ENCODE measurements at regions of chr9 and their contacts with region 1.

Region 1: DNA sequence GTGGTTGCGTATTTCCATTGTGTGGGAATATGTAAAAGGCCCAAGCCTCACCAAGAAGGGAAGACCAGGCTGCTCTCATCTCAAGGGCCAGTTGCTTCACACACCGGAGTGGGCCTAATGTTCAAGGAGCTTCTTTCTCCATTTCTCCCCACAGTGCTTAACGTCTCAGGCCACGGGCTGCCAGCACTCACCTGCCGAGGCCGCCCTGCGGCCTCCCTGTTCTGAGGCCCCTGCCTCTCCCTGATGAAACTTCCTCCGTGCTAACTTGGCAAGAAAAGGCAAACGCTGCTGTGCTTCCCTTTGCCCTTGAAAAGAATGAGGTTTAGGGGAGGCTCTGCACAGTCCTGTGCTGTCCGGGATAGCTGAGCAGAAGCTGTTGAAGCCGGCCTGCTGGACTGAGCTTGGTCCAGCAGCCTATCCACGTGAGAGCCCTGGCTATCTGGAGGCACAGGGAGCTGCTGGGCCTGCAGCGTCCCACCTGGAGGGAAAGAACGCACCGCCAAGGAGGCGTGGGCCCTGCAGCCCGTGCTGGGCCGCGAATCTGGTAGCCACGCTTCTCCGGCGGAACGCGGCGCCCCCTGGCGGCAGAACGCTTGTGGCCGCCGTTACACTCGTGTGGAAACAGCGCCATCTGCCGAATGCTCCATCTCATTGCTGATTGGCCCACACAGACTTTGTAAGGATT is 73.5 kb upstream of the PRSS3 start:
- H3K4me3 ChIP-seq: no peak overlapping the region
- H3K27ac ChIP-seq: no peak overlapping the region
- H3K4me1 ChIP-seq: no peaks in the 10 kb centered on the region
- CTCF ChIP-seq: peak; percentile 100

Region 2: GRCh38 chr9:33374634-33375213 is 347.1 kb before region 1 on chr9:
- CTCF ChIA-PET with region 1: interaction called, 15 read pairs
- POLR2A ChIA-PET with region 1: no interaction called
- H3K4me3 ChIP-seq: no peak overlapping the region
- H3K27ac ChIP-seq: no peak overlapping the region
- H3K4me1 ChIP-seq: no peaks in the 10 kb centered on the region
- CTCF ChIP-seq: no peak; the same call in 1 of the 2 replicates

Region 3: DNA sequence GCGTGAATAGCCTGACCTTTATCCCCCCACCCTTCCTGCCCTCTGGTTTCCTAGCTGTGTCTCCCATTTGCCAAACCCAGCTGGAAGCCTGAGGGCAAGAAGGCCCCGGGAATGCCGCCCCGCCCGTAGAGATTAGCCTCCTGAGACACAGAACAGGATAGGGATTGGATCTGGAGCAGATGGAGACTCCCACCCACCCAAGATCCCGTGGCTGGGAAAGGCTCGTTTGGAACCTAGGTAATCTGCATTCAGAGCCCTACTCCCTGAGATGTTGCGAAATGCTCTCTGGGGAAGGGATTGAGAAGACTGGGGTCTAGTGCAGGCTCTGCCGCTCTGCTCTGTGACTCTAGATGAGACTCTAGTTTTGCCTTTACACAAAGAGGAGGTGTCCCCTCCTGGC is 285.4 kb before region 1 on chr9:
- CTCF ChIA-PET with region 1: no interaction called
- POLR2A ChIA-PET with region 1: no interaction called
- H3K4me3 ChIP-seq: no peak overlapping the region
- H3K27ac ChIP-seq: no peak overlapping the region
- H3K4me1 ChIP-seq: no peaks in the 10 kb centered on the region
- CTCF ChIP-seq: no peak

Region 4: GRCh38 chr9:33524306-33524947 is 197.4 kb before region 1 on chr9:
- CTCF ChIA-PET with region 1: interaction called, 10 read pairs
- POLR2A ChIA-PET with region 1: no interaction called
- H3K4me3 ChIP-seq: peak overlapping the region; percentile 72
- H3K27ac ChIP-seq: peak overlapping the region; percentile 85
- H3K4me1 ChIP-seq: 0 out of 2 replicates have a peak, but pooled peaks cover 2% of the 10 kb centered on the region
- CTCF ChIP-seq: no peak

Region 5: GRCh38 chr9:33638391-33638915 is 83.4 kb before region 1 on chr9:
- CTCF ChIA-PET with region 1: interaction called, 44 read pairs
- POLR2A ChIA-PET with region 1: no interaction called
- H3K4me3 ChIP-seq: no peak overlapping the region
- H3K27ac ChIP-seq: no peak overlapping the region
- H3K4me1 ChIP-seq: no peaks in the 10 kb centered on the region
- CTCF ChIP-seq: no peak

Region 6: DNA sequence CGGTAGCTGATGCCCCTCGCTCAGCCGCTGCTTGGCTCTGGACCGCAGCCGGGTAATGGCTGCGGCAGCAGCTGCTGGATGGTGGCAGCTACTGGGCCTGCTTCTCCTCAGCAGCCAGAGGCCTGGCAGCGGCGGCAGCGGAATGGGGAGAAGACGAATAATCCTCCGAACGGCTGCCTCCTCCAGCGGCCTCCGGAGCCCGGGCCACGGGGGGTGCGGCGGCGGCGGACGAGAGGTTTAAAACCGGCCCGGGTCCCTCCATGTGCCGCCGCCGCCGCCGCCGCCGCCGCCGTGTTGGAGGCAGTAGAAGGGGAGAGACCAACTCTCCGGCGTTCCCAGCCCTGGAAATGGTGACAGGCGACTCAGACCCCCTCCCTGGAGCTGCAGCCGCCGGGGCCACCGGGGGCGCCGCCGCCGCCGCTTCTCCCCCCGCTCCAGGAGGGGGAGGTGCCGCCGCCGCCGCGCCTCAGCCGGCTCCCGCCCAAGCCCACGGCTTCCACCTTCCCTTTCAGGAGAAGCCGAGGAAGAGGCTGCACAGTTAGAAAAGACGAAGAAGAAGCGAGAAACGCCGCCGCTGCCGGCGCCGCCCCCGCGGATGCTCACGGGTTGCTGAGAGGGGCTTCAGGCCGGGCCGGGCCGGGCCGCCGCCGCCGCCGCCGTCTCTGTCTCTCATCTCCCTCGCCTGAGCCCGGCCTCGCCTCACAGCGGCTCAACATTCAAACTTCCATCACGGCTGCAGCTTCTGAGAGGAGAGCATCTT is 44.9 kb before region 1 on chr9:
- CTCF ChIA-PET with region 1: interaction called, 22 read pairs
- POLR2A ChIA-PET with region 1: no interaction called
- H3K4me3 ChIP-seq: peak overlapping the region; percentile 65
- H3K27ac ChIP-seq: peak overlapping the region; percentile 97
- H3K4me1 ChIP-seq: peaks cover 2% of the 10 kb centered on the region; the same call in 1 of the 2 replicates
- CTCF ChIP-seq: no peak

Region 7: GRCh38 chr9:33687779-33688178 is 34.0 kb before region 1 on chr9:
- CTCF ChIA-PET with region 1: interaction called, 17 read pairs
- POLR2A ChIA-PET with region 1: no interaction called
- H3K4me3 ChIP-seq: no peak overlapping the region
- H3K27ac ChIP-seq: no peak overlapping the region
- H3K4me1 ChIP-seq: peaks cover 11% of the 10 kb centered on the region
- CTCF ChIP-seq: no peak

Region 8: GRCh38 chr9:33737811-33738606 is 16.2 kb after region 1 on chr9:
- CTCF ChIA-PET with region 1: interaction called, 63 read pairs
- POLR2A ChIA-PET with region 1: no interaction called
- H3K4me3 ChIP-seq: no peak overlapping the region
- H3K27ac ChIP-seq: no peak overlapping the region
- H3K4me1 ChIP-seq: no peaks in the 10 kb centered on the region
- CTCF ChIP-seq: peak; percentile 65

Region 9: DNA sequence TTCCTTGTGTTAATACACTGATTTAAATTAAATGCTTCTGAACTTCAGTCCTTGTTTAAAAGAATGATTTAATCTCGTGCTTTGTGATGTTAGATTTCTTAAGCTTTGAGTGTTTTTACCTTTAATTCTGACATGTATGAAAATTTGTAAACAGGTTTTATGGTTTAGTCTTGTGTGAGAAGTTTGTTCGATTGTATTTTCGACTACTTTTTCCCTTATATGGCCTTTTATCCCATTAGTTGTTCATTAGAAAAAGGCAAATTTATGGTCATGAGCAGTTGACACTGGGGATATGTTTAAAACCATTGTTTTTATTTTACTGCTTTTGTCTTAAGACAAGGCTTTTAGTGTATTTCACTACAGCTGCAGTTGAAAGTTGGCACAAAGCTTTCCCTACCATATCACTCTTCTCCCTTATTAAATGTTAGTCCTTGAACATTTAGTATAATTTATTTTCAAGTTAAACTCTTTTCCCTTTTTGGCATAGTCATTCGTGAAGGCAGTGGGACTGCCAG is 98.5 kb after region 1 on chr9:
- CTCF ChIA-PET with region 1: no interaction called
- POLR2A ChIA-PET with region 1: no interaction called
- H3K4me3 ChIP-seq: no peak overlapping the region
- H3K27ac ChIP-seq: no peak overlapping the region
- H3K4me1 ChIP-seq: peaks cover 2% of the 10 kb centered on the region; the same call in 1 of the 2 replicates
- CTCF ChIP-seq: no peak

Measured in HEK293 (cell line).